Mucosa of descending colon (tissue), 3 donors: ENCODE measurements at regions of chr12 and their contacts with region 1.

Region 1: DNA sequence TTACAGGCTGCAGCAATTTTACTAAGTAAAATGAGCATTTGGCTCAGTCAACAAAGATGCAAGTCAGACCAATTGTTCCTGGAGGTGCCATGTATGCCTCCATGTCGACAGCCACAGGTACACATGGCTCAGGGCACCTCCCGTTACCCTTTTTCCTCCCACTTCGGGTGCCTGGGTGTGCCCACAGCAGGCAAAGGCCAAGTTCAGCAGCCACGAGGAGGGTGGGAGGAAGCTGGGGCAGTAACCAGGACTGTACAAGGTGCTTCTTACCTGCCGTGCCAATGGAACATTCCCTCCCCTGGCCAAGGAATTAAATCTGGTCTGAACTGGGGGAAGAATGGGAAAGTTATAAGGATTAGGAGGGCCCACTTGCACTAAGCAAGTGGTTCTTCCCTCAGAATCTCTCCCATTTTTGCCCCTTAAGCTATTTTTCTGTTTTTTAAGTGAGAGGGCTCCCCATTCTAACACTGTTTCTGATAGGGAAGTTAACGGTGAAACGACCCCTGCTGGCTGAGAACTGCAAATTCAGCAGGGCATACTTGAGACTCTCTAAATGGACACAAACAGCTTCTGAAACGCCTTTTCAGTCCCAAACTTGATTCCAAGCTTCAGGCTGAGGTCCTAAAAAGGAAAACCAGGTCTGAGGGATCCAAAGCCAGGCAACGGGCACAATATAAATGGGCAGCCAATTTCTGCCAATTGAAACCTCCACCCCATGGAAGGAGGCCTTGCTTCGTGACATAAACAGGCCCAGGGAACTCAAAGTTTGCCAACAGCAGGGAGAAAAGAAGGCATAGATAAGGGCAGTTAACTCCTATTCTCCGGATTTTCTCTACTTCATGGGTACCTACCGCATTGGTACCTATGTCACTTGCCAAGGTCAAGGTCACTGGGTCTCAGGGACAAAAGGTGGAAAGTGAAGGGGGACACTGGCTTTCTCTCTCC is 24.8 kb downstream of the CLECL1 start:
- DNase-seq: peak; percentile 41 to 69 (median 54)
- ATAC-seq: peak; percentile 85
- H3K4me3 ChIP-seq: no peak overlapping the region
- H3K4me1 ChIP-seq: no peaks in the 10 kb centered on the region
- CTCF ChIP-seq: peak; percentile 56

Region 2: DNA sequence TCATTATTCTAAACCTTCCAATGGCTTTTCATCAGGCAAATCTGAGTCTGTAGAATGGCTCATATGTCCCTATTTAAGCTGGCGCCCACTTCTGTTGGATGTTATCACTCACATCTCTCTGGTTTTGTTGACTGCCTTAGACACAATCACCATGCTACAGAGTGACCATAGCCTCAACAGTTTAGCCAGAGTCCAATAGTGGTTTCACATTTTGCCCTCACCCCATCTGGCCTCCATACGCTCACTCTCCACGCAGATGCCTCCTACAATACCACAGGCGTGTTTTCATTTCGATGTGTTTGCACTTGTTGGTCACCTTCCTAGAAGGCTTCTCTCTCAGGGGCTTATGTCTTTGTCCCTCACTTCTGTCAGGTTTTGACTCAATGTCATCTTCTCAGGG is 103.8 kb before region 1 on chr12:
- intact Hi-C with region 1: no loop called
- DNase-seq: no peak
- ATAC-seq: no peak
- H3K4me3 ChIP-seq: no peak overlapping the region
- H3K4me1 ChIP-seq: no peaks in the 10 kb centered on the region
- CTCF ChIP-seq: no peak

Region 3: DNA sequence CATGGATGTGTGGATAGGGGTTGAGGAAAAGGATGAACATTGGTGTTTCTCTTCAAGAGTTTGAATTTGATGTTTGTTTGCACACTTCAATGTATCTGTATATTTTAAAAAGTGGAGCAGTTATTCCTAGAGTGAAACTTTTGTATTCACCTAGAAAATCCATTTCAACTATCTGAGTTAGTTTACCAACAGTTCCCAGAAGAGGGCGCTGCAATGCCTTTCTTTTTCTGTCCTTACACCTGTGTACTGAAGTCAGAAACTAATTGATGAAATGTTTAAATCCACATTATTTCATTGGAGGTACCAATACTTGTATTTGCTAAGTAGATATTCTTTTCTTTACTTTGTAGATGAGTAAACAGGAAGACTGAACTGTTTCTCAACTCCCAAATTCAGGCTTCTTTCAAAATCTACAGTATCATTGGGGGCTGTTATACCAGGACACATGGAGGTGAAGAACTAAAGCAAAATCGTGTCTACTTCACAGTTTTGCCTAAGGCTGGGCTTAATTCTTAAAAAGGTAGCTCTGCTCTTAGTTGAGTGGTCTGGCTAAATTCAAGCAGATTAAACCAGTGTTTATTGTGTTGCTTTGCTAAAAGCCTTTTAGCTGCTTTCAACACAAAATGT is 73.8 kb before region 1 on chr12:
- intact Hi-C with region 1: loop called (anchors 2 to 10 kb)
- DNase-seq: peak in 1 of 3 donors; percentile 89
- ATAC-seq: peak; percentile 77
- H3K4me3 ChIP-seq: no peak overlapping the region
- H3K4me1 ChIP-seq: no peaks in the 10 kb centered on the region
- CTCF ChIP-seq: peak; percentile 33